Vagina (tissue), 2 donors: ENCODE measurements at regions of chr11 and their contacts with region 1.

Region 1: GRCh38 chr11:15101072-15101709 is 13.5 kb upstream of the INSC start:
- DNase-seq: no peak
- H3K4me3 ChIP-seq: no peak overlapping the region
- H3K27ac ChIP-seq: no peak overlapping the region
- H3K4me1 ChIP-seq: no peaks in the 10 kb centered on the region
- H3K27me3 ChIP-seq: no peaks in the 10 kb centered on the region
- CTCF ChIP-seq: peak; percentile 30 to 56 (median 53)
- POLR2A ChIP-seq: no peak

Region 2: DNA sequence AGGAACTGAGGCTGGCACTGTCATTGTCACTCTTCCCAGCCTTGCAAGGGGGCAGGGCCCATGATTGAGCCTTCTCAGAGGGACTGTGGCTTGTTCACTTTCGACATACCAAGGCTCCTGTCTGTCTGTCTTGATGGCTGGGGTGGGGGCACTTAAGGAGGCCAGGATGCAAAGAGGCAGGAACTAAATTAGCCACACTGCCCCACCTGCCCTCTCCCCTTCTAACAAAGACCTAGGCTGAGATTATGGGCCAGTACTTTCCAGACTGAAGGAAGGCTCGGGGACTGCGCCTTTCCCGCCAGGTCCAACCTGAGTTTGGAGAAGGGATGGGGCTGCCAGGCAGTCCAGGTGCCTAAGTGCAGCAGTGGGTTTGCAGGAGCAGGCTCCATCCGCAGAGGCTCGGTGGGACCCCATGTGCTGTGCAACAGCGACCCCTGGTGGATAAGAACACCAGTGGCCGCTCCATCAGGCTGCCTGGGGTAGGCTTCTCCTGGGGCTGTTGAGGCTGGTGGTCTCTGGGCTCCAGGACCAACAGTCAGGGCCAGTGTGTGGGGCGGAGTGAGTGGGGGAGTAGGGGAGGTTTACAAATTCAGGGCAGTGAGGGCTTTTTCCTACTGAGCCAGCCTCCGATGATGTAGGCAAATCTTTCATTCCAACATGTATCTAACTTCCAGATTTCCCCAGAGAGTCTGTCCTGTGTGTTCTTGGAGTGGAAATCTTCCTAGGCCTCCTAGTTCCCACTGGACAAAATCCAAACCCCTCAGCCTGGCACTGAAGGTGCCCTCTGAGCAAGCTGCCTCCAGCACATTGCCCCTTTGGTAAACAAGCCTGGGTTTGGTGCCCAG is 107.4 kb after region 1 on chr11:
- intact Hi-C with region 1: loop called (anchors 5 kb)
- DNase-seq: peak in 1 of 2 donors; percentile 86
- H3K4me3 ChIP-seq: no peak overlapping the region
- H3K27ac ChIP-seq: no peak overlapping the region
- H3K4me1 ChIP-seq: no peaks in the 10 kb centered on the region
- H3K27me3 ChIP-seq: no peaks in the 10 kb centered on the region
- CTCF ChIP-seq: peak; percentile 53 to 73 (median 65)
- POLR2A ChIP-seq: no peak